OCI-LY7 (cell line): ENCODE measurements at regions of chr1 and their contacts with region 1.

Region 1: GRCh38 chr1:14606632-14607031 is 8.1 kb downstream of the KAZN start:
- DNase-seq: peak; percentile 71
- H3K4me3 ChIP-seq: no peak overlapping the region
- H3K27ac ChIP-seq: no peak overlapping the region
- H3K4me1 ChIP-seq: peaks cover 11% of the 10 kb centered on the region
- CTCF ChIP-seq: peak; percentile 90

Region 2: GRCh38 chr1:14460173-14460572 is 146.5 kb before region 1 on chr1:
- CTCF ChIA-PET with region 1: no interaction called
- POLR2A ChIA-PET with region 1: no interaction called
- intact Hi-C with region 1: no loop called
- DNase-seq: no peak
- H3K4me3 ChIP-seq: no peak overlapping the region
- H3K27ac ChIP-seq: no peak overlapping the region
- H3K4me1 ChIP-seq: no peaks in the 10 kb centered on the region
- CTCF ChIP-seq: no peak

Region 3: DNA sequence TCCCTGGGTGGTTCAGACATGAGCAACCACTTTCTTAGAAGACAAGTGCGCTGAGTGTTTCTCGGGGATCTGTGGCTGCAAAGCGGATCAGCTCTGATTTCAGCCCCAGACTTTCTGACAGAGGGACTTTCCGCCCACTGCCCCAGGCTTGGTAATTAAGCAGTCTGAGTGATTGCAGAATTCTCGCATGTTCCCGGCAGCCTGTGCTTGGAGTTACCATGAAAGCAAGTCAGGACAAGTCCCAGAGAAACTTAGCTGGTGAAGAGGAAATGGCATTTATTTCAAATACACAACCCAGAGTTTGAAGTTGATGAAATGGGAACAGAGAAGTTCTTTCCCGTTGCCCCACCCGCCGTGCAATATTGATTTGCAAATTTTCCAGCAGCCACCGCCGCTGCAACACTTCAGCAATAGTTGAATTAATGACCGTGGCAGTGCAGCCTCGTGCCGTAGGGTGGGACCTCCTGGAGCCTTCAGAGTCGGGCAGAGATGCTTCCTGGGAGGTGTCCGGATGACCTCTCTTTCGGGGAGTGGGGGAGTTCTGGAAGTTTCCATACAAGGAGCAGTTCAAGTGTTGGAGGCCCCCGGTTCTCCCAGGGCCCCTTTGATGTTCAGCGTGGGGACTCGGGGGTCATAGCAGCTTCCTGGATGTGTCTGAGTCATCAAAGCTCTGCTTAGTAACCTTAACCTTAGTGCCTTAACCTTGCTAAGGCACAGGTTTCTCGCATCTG is 126.6 kb after region 1 on chr1:
- CTCF ChIA-PET with region 1: no interaction called
- POLR2A ChIA-PET with region 1: no interaction called
- intact Hi-C with region 1: loop called (anchors 2 kb)
- DNase-seq: peak; percentile 61
- H3K4me3 ChIP-seq: peak overlapping the region; percentile 93
- H3K27ac ChIP-seq: peak overlapping the region; percentile 98
- H3K4me1 ChIP-seq: peaks cover 50% of the 10 kb centered on the region
- CTCF ChIP-seq: no peak

Region 4: GRCh38 chr1:14804626-14805025 is 198.0 kb after region 1 on chr1:
- CTCF ChIA-PET with region 1: no interaction called
- POLR2A ChIA-PET with region 1: no interaction called
- intact Hi-C with region 1: loop called (anchors 1 kb)
- DNase-seq: peak; percentile 57
- H3K4me3 ChIP-seq: no peak overlapping the region
- H3K27ac ChIP-seq: no peak overlapping the region
- H3K4me1 ChIP-seq: peaks cover 11% of the 10 kb centered on the region
- CTCF ChIP-seq: peak; percentile 66

Region 5: DNA sequence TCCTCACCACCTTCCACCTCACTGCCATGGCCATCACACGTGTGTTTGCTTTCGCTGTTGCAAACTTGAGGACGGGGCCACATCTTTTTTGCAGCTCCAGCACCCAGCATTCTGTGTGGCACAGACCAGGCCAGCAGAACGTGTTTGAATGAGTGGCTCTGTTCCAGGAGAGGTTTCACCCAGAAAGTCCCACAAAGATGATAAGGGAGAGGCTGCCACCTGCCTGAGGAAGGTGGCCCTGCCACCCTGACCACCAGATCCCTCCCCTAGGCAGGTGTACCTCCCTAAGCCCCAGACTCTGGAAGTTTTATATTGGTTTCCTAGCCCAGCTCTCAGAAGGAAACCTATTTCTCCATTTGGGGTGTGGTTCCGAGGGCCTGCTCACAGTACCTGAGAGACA is 243.9 kb after region 1 on chr1:
- CTCF ChIA-PET with region 1: no interaction called
- POLR2A ChIA-PET with region 1: no interaction called
- intact Hi-C with region 1: loop called (anchors 1 kb)
- DNase-seq: peak; percentile 67
- H3K4me3 ChIP-seq: no peak overlapping the region
- H3K27ac ChIP-seq: no peak overlapping the region
- H3K4me1 ChIP-seq: no peaks in the 10 kb centered on the region
- CTCF ChIP-seq: peak; percentile 72

Region 6: GRCh38 chr1:15028102-15028501 is 421.5 kb after region 1 on chr1:
- CTCF ChIA-PET with region 1: no interaction called
- POLR2A ChIA-PET with region 1: no interaction called
- intact Hi-C with region 1: loop called (anchors 1 kb)
- DNase-seq: no peak
- H3K4me3 ChIP-seq: no peak overlapping the region
- H3K27ac ChIP-seq: no peak overlapping the region
- H3K4me1 ChIP-seq: peaks cover 2% of the 10 kb centered on the region
- CTCF ChIP-seq: no peak

Region 7: GRCh38 chr1:15046487-15047165 is 440.0 kb after region 1 on chr1:
- CTCF ChIA-PET with region 1: no interaction called
- POLR2A ChIA-PET with region 1: no interaction called
- intact Hi-C with region 1: loop called (anchors 5 kb)
- DNase-seq: peak; percentile 72
- H3K4me3 ChIP-seq: no peak overlapping the region
- H3K27ac ChIP-seq: no peak overlapping the region
- H3K4me1 ChIP-seq: no peaks in the 10 kb centered on the region
- CTCF ChIP-seq: peak; percentile 91